MCF 10A (cell line): ENCODE measurements at regions of chr7 and their contacts with region 1.

Region 1: DNA sequence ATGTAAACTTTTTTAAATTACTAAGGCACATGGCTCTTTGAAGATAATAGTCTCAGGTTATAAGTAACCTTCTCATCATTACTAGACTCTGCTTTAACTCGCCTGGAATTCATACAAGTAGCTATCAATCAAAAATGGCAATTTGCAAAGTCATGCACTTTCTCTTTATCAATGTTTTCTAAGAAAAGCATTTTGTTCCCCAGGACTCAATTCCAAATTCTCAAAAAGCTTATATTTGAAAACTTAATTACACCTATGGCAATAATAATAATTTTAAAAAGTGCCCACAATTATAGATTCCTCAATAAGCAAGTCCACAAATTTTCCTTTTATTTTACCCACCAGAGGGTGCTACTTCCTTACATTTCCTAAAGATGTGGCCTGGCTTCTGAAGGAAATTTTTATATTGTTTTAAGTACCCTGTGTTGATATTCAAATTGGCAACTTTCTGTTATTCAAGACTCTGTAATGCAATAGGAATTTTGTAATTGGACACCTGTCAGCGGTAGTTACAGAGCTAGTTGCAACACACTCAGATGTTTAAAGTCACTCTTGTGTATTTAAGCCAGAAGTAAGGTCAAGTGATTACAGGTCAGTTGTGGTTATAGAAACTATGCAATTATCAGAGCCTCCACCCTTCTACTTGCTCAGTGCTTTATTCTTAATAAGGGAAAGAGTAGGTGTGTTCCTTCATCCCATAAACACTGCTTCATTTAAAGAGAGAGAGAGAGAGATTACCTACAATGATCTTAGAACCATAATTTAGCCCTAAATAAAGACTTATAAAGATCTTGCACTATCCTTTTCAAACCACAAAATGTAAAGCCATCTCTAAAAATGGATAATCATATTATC is 47.1 kb upstream of the HYAL4 start:
- DNase-seq: peak; percentile 95
- H3K4me3 Mint-ChIP-seq: peak overlapping the region; percentile 63
- H3K27ac Mint-ChIP-seq: peak overlapping the region; percentile 94
- H3K4me1 Mint-ChIP-seq: peaks cover 12% of the 10 kb centered on the region
- H3K27me3 Mint-ChIP-seq: no peaks in the 10 kb centered on the region
- CTCF ChIP-seq: peak; percentile 51

Region 2: DNA sequence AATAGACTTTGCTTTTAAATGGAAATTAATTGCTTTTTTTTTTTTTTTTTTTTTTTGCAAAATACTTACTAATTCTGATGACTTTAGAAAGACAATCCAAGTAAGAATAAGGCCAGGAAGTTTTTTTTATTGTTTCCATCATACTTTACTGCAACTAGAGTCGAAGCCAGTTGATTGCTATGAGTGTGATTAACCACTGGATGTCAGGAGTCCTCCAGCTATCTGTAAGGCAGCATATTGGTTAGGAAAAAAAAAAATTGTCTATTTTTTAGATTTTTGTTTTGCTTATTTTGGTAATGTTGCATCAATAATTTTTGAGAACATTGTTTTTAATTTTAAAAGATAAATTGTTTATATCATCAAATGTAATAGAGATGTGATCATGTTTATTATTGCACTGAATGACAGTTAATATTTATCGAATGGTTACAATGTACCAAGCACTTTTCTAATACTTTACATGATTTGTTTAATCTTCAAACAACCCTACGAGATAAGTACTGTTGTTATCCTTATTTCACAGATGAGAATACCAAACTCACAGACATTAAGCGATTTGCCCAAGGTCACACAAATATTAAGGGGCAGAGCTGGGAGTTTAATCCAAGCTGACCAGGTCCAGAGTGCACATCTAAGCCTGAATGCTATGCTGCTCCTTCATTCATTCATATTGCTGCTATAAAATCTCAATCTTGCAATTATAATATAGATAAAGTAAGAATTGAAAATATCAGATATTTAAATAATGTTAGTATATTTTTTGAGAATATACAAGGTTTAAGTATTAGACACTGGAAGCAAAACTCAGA is 162.1 kb before region 1 on chr7:
- CTCF ChIA-PET with region 1: interaction called, 4 read pairs
- POLR2A ChIA-PET with region 1: interaction called, 4 read pairs
- intact Hi-C with region 1: loop called (anchors 2 kb)
- DNase-seq: peak; percentile 59
- H3K4me3 Mint-ChIP-seq: no peak overlapping the region
- H3K27ac Mint-ChIP-seq: no peak overlapping the region
- H3K4me1 Mint-ChIP-seq: peaks cover 22% of the 10 kb centered on the region
- H3K27me3 Mint-ChIP-seq: no peaks in the 10 kb centered on the region
- CTCF ChIP-seq: peak; percentile 70

Region 3: GRCh38 chr7:123770378-123770777 is 27.5 kb before region 1 on chr7:
- CTCF ChIA-PET with region 1: interaction called, 45 read pairs
- POLR2A ChIA-PET with region 1: interaction called, 42 read pairs
- intact Hi-C with region 1: loop called (anchors 2 kb)
- DNase-seq: peak; percentile 97
- H3K4me3 Mint-ChIP-seq: peak overlapping the region; percentile 67
- H3K27ac Mint-ChIP-seq: peak overlapping the region; percentile 93
- H3K4me1 Mint-ChIP-seq: peaks cover 38% of the 10 kb centered on the region
- H3K27me3 Mint-ChIP-seq: no peaks in the 10 kb centered on the region
- CTCF ChIP-seq: no peak

Region 4: DNA sequence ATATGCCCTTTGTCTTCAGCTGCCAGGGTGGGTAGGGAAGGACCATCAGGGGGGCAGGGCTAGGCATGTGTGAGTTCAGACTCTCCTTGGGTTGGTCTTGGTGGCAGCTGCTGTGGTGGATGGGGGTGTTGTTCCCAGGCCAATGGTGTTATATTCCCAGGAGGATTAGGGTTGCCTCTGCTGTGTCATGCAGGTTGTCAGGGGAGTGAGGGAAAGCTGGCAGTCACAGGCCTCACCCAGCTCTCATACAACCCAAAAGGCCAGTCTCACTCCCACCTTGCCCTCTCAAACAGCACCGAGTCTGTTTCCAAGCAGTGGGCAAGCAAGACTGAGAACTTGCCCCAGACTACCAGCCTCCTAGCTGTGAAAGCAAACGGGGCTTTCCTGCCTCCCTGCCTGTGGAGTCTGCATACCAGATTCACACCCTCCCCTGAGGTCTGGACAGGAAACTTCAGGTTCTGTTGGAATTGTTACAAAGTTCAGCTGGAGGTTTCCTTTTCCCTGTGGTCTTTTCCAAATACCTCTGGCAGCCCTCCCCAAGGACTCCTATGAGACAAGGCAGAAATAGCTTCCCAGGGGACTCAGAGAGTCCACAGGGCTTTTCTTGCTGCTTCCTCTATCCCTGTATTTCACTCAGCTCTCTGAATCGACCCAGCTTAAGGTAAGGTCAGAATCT is 48.5 kb after region 1 on chr7:
- CTCF ChIA-PET with region 1: interaction called, 13 read pairs
- POLR2A ChIA-PET with region 1: interaction called, 6 read pairs
- intact Hi-C with region 1: no loop called
- DNase-seq: peak; percentile 73
- H3K4me3 Mint-ChIP-seq: no peak overlapping the region
- H3K27ac Mint-ChIP-seq: peak overlapping the region; percentile 33
- H3K4me1 Mint-ChIP-seq: peaks cover 14% of the 10 kb centered on the region
- H3K27me3 Mint-ChIP-seq: no peaks in the 10 kb centered on the region
- CTCF ChIP-seq: no peak

Region 5: GRCh38 chr7:123916240-123916724 is 118.4 kb after region 1 on chr7:
- CTCF ChIA-PET with region 1: interaction called, 4 read pairs
- POLR2A ChIA-PET with region 1: interaction called, 4 read pairs
- intact Hi-C with region 1: loop called (anchors 1 kb)
- DNase-seq: peak; percentile 47
- H3K4me3 Mint-ChIP-seq: no peak overlapping the region
- H3K27ac Mint-ChIP-seq: no peak overlapping the region
- H3K4me1 Mint-ChIP-seq: peaks cover 6% of the 10 kb centered on the region
- H3K27me3 Mint-ChIP-seq: no peaks in the 10 kb centered on the region
- CTCF ChIP-seq: peak; percentile 20

Region 6: DNA sequence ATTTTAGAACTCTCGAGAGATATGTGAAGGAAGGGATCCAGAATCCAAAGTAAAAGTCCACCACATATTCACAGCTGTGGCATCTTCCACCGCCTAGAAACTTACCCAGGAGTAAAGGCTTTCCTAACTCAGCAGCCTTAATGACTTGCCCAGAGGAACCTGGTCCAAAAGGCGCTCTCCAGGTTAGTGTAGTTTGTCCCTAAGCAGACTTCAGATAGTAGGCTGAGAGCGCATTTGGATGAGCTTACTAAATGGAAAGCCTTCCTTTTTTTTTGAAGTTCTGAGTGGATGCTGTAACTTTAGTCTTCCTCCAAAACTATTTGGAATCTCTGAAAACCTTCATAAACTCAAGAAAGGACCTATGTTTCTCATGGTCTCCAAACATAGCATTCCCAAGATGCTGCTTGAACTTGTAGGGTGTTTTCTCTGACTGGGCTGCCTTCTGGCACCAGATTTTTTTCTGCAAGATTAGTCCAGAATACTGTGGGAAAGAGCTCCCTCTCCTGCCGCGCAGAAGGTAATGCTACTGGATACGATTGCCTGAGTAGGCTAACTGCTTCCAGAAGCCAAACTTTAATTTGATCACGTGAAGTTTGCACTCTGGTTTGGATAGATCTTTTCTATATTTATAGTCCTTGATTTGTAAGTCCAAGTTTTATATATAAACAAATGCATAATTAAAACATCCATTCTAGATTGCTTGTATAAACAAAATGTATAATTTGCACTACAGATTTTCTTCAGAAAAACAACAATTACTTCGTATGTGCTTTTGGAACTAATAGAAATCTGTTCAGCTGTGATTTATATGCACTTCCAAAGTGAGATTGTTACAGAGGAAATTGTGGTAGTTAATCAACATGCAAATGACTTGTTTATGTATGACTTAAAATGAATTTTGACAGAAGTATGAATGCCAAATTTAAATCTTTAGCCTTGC is 987.2 kb after region 1 on chr7:
- CTCF ChIA-PET with region 1: no interaction called
- POLR2A ChIA-PET with region 1: no interaction called
- intact Hi-C with region 1: loop called (anchors 2 kb)
- DNase-seq: peak; percentile 64
- H3K4me3 Mint-ChIP-seq: no peak overlapping the region
- H3K27ac Mint-ChIP-seq: no peak overlapping the region
- H3K4me1 Mint-ChIP-seq: no peaks in the 10 kb centered on the region
- H3K27me3 Mint-ChIP-seq: no peaks in the 10 kb centered on the region
- CTCF ChIP-seq: peak; percentile 91